Head of caudate nucleus (tissue), 42 donors: ENCODE measurements at regions of chr2 and their contacts with region 1.

Region 1: GRCh38 chr2:157596992-157597681 is 31.5 kb downstream of the ACVR1C start:
- DNase-seq: peak; percentile 11 to 80 (median 54)

Region 2: DNA sequence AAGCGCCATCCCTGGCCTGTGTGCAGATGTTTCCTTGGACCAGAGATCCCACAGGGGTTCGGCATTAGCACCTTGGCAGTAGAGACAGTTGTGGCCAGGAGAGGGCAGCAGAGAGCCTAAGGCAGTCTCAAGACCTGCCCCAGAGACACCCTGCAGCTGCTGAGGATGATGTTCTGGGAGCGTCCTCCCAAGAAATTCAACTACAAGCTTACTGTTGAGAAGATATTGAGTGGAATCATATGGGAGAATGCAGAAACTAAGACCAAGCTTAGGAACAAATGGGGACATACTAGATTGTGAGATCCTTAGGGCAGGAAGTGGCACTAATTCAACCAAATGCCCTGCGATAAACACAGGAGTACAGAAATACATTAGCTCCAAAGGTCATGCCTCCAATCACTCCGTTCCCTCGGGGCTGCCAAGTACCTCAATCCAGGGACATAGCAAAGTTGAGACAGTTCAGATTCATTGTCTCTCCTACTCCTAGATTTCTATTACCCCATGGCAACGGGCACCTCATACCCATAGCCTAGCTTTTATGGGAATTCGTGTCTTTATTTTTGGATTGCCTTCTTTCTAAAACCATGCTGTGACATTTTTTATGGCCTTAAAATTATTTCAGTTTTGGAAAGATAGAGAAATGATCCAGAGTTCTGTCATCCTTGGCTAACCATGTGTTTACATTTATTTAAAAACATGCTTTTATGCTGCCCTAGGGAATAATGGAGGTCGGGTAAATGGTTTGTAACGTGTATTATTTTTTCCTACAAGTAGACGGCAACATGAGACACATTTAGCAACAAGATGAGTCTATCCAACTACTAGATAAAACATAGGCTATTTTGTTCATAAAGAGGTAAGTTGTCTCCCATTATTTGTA is 269.3 kb before region 1 on chr2:
- intact Hi-C with region 1: loop called (anchors 10 kb)
- DNase-seq: peak; percentile 67 to 97 (median 92)

Region 3: DNA sequence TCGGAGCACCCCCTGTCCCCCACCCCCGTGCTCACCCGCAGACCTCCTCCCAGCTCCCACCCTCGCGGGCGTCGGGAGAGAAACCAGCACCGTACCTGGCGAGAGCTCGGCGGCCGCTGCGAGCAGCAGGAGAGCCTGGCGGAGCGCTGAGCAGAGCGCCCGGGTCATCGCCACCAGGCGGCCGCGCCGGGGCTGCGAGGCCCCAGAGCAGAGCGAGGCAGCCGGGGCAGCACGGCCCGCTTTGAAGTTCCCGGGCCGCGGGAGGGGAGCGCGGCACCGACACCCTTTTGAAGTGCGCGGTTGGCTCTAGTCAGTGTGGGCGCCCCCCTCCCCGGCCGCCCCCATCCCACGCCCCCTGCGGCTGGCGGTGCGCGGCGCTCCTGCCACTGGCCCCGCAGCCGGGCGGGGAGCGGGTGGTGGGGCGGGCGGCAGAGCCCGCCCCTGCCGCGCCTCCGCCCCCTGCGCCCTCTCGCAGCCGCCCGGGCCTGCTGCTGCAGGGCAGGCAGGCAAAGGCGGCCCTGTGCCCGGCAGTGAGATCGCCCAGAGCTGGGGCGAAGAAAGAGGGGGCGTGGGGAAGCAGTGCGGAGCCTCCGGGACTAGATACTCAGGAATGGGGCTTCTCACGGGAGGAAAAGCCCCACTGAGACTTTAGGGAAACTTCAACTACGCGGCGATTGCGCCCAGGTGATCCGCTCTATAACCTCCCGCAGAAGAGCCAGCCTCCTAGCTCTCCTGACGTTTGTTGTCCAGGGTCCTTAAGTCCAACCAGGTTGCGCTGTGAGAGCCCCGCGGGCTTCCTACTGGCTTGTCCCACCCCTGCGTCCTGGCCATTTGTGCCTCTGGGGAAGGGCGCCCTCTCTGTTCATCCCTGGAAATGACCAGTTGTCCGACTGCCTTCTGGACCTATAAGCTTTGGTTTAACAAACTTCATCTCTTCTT is 31.6 kb after region 1 on chr2 and contains the start of gene ACVR1C:
- intact Hi-C with region 1: loop called (anchors 5 kb)
- DNase-seq: peak; percentile 59 to 92 (median 82)